Psoas muscle (tissue), 8 donors: ENCODE measurements at regions of chr2 and their contacts with region 1.

Region 1: GRCh38 chr2:214695789-214696188 is 113.7 kb downstream of the BARD1 start:
- DNase-seq: no peak
- ATAC-seq: no peak
- H3K4me3 ChIP-seq: no peak overlapping the region
- H3K27ac ChIP-seq: no peak overlapping the region
- H3K4me1 ChIP-seq: no peaks in the 10 kb centered on the region
- H3K27me3 ChIP-seq: no peaks in the 10 kb centered on the region
- CTCF ChIP-seq: no peak

Region 2: GRCh38 chr2:214341646-214342045 is 354.1 kb before region 1 on chr2:
- intact Hi-C with region 1: loop called in 1 of 2 experiments (anchors 5 kb)
- DNase-seq: no peak
- ATAC-seq: no peak
- H3K4me3 ChIP-seq: no peak overlapping the region
- H3K27ac ChIP-seq: no peak overlapping the region
- H3K4me1 ChIP-seq: no peaks in the 10 kb centered on the region
- H3K27me3 ChIP-seq: no peaks in the 10 kb centered on the region
- CTCF ChIP-seq: no peak

Region 3: GRCh38 chr2:214484239-214484638 is 211.6 kb before region 1 on chr2:
- intact Hi-C with region 1: no loop called
- DNase-seq: no peak
- ATAC-seq: peak; percentile 73 to 86 (median 82)
- H3K4me3 ChIP-seq: no peak overlapping the region
- H3K27ac ChIP-seq: peak overlapping the region; percentile 67
- H3K4me1 ChIP-seq: peaks cover 16% of the 10 kb centered on the region
- H3K27me3 ChIP-seq: no peaks in the 10 kb centered on the region
- CTCF ChIP-seq: no peak